Activated T-helper 1 cell treated with anti-CD3 and anti-CD28 coated beads, Interleukin-12 subunit alpha, Interleukin-12 subunit beta, Interleukin-2, Interleukin-4 antibody, amounts not matched to agents 30 ng/mL and 10 ng/mL and 1 ng/mL, durations not matched to agents 14 hours and 24 hours and 36 hours (primary cell): ENCODE measurements at regions of chr19 and their contacts with region 1.

Region 1: DNA sequence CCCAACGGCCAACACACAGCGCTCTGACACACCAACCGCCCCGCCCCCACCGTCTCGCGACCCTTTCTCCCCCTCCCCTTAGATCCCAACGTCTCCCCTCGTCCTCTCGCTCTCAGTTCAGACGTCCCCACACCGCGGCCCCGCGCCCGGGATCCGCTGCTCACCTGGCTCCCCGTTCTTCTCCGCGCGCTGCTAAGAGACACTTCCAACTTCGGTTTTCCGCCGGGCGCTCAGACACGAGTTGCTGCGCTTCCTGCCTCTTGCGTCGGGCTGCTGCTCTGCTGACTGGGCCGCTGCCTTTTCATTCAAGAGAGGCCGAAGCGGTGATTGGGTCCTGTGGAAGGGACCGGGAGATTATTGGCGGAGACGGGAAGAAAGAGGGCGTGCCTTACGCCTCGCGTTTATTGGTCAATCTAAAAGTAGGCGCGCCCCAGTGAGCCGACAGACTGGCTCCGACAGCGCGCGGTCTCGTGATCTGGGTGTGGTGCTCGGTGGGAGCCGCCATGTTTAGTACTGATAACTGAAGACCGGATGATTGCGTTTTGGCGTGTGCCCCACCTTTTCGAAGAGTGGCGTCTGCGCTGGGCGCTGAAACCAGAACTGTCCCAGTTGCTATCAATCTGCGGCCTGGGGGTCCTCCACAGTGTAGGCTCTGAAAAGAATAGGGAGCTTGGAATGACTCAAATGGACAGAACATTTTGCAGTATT is at the start of gene DDX39A:
- DNase-seq: peak; percentile 98
- H3K4me3 Mint-ChIP-seq: peak within 1 kb of the TSS; percentile 98
- H3K27ac Mint-ChIP-seq: peak within 1 kb of the TSS; percentile 100
- H3K4me1 Mint-ChIP-seq: peaks cover 29% of the 10 kb centered on the region
- H3K27me3 Mint-ChIP-seq: no peaks in the 10 kb centered on the region
- total RNA-seq, gene DDX39A: 273 and 287 TPM in 2 replicates

Region 2: GRCh38 chr19:14318873-14319272 is 100.4 kb before region 1 on chr19:
- intact Hi-C with region 1: no loop called
- DNase-seq: no peak
- H3K4me3 Mint-ChIP-seq: no peak overlapping the region
- H3K27ac Mint-ChIP-seq: no peak overlapping the region
- H3K4me1 Mint-ChIP-seq: no peaks in the 10 kb centered on the region
- H3K27me3 Mint-ChIP-seq: peaks cover 6% of the 10 kb centered on the region

Region 3: DNA sequence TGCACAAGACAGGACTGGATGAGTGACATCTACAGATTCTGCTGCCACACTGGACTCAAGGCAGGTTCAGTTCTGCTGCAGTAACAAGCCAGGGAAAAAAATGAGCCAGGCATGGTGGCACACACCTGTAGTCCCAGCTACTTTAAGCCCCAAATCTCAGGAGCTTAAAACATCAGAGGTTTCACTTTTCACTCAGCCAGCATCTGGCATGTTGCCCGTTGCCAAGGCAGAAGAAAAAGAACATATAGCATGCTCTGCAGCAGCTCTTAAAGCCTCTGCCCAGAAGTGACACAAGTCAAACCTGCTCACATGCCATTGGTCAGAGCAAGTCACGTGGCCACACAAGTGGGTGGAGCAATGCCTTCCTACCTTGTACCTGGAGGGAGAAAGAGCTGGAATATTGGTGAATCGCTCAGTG is 52.8 kb before region 1 on chr19:
- intact Hi-C with region 1: loop called (anchors 2 kb)
- DNase-seq: peak; percentile 86
- H3K4me3 Mint-ChIP-seq: peak overlapping the region; percentile 74
- H3K27ac Mint-ChIP-seq: peak overlapping the region; percentile 97
- H3K4me1 Mint-ChIP-seq: peaks cover 80% of the 10 kb centered on the region
- H3K27me3 Mint-ChIP-seq: no peaks in the 10 kb centered on the region

Region 4: GRCh38 chr19:14405758-14406644 is 13.3 kb before region 1 on chr19:
- intact Hi-C with region 1: loop called (anchors 1 kb)
- DNase-seq: peak; percentile 85
- H3K4me3 Mint-ChIP-seq: no peak overlapping the region
- H3K27ac Mint-ChIP-seq: peak overlapping the region; percentile 65
- H3K4me1 Mint-ChIP-seq: no peaks in the 10 kb centered on the region
- H3K27me3 Mint-ChIP-seq: no peaks in the 10 kb centered on the region

Region 5: GRCh38 chr19:14432791-14433553 is 13.7 kb after region 1 on chr19 and contains the start of gene PKN1:
- intact Hi-C with region 1: loop called (anchors 1 kb)
- DNase-seq: peak; percentile 47
- H3K4me3 Mint-ChIP-seq: peak within 1 kb of the TSS; percentile 89
- H3K27ac Mint-ChIP-seq: peak within 1 kb of the TSS; percentile 81
- H3K4me1 Mint-ChIP-seq: peaks cover 37% of the 10 kb centered on the region
- H3K27me3 Mint-ChIP-seq: peaks cover 12% of the 10 kb centered on the region
- total RNA-seq, gene PKN1: 151 and 180 TPM in 2 replicates

Region 6: GRCh38 chr19:14440049-14440448 is 20.8 kb after region 1 on chr19:
- intact Hi-C with region 1: loop called (anchors 2 kb)
- DNase-seq: peak; percentile 78
- H3K4me3 Mint-ChIP-seq: peak overlapping the region; percentile 95
- H3K27ac Mint-ChIP-seq: peak overlapping the region; percentile 93
- H3K4me1 Mint-ChIP-seq: peaks cover 33% of the 10 kb centered on the region
- H3K27me3 Mint-ChIP-seq: no peaks in the 10 kb centered on the region

Region 7: GRCh38 chr19:14487370-14488125 is 68.3 kb after region 1 on chr19:
- intact Hi-C with region 1: loop called (anchors 5 kb)
- DNase-seq: no peak
- H3K4me3 Mint-ChIP-seq: no peak overlapping the region
- H3K27ac Mint-ChIP-seq: no peak overlapping the region
- H3K4me1 Mint-ChIP-seq: peaks cover 6% of the 10 kb centered on the region
- H3K27me3 Mint-ChIP-seq: no peaks in the 10 kb centered on the region